Ascending aorta (tissue), 2 donors: ENCODE measurements at regions of chr11 and their contacts with region 1.

Region 1: DNA sequence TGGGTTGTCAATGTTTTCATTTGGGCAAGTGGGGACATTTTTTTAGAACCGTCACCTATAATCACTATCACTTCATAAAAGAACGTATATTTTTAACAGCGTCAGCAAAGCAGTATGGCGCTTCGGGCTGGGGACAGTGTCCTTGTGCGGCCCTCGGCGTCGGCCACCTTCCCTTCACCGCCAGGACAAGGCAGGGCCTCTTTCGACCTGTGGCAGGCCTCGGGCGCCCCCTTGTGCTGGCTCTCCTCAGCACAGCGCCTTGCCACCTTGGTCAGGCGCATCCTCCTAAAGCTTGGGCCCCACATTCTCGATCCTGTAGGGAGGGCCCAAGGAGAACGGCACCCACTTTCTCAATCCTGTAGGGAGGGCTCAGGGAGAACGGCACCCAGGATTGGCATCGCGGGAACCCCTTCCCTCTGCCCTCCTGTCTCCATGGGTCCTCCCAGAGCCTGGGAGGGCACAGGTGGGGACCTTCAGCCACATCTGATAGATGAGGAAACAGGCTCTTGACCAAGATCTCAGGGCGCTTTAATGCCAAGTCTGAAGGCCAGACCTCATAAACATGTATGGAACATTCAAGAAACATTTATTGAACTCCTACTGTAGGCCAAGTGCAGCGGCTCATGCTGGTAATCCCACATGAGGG is 11.5 kb upstream of the FADD start:
- DNase-seq: peak in 1 of 2 donors; percentile 85
- H3K4me3 ChIP-seq: no peak overlapping the region
- H3K27ac ChIP-seq: no peak overlapping the region
- H3K4me1 ChIP-seq: peaks cover 0 to 11% of the 10 kb centered on the region in 2 donors
- H3K27me3 ChIP-seq: no peaks in the 10 kb centered on the region
- CTCF ChIP-seq: peak; percentile 91 to 92 (median 92)

Region 2: DNA sequence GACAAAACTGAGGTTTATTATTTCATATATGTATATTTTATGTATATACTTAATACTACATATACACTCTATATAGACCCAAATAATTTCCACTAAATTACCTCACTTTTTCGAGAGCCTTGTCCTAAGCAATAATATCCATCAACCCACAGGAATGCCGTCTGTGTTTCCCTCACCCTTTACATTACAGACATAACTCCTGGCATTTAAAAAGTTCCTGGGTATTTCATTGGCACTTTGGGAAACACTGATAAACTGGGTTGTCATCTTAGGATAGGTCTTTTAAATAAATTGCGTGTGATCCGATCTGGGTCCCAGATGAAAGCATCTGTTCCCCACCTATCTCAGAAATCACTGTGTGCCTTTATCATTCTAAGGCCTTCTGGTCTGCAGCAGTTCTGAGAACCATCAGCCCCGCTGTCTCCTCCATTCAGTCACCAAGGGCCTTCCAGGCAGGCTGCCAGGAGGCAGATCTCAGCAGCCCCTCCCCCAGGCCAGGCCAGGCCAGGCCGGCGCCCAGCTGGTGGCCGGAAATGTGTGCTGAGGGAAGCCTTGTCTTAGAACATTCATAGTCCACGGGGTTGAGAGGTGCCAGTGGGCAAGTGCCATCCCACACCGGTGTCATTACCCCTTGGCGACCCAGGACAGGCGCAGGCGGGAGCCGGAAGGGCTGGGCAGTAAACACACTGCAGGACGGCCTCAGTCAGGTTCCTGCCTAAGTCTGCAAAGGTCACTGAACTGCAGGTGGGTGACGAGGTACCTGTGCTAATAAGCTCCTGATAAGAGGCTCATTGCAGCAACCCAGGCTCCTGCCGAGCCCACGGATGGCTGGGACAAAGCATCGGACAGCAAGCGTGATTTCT is 491.1 kb before region 1 on chr11:
- intact Hi-C with region 1: loop called (anchors 5 kb)
- DNase-seq: no peak
- H3K4me3 ChIP-seq: no peak overlapping the region
- H3K27ac ChIP-seq: no peak overlapping the region
- H3K4me1 ChIP-seq: peaks cover 0 to 14% of the 10 kb centered on the region in 2 donors
- H3K27me3 ChIP-seq: peaks cover 16% of the 10 kb centered on the region
- CTCF ChIP-seq: no peak

Region 3: GRCh38 chr11:69909561-69910496 is 281.8 kb before region 1 on chr11:
- intact Hi-C with region 1: loop called (anchors 1 kb)
- DNase-seq: no peak
- H3K4me3 ChIP-seq: peak overlapping the region in 1 of 2 donors; percentile 4
- H3K27ac ChIP-seq: no peak overlapping the region
- H3K4me1 ChIP-seq: peaks cover 14 to 40% of the 10 kb centered on the region in 2 donors
- H3K27me3 ChIP-seq: no peaks in the 10 kb centered on the region
- CTCF ChIP-seq: peak; percentile 39 to 72 (median 67)

Region 4: GRCh38 chr11:70532071-70532450 is 340.4 kb after region 1 on chr11:
- intact Hi-C with region 1: no loop called
- DNase-seq: no peak
- H3K4me3 ChIP-seq: no peak overlapping the region
- H3K27ac ChIP-seq: no peak overlapping the region
- H3K4me1 ChIP-seq: no peaks in the 10 kb centered on the region
- H3K27me3 ChIP-seq: no peaks in the 10 kb centered on the region
- CTCF ChIP-seq: no peak